A549 (cell line): ENCODE measurements at regions of chr1 and their contacts with region 1.

Region 1: GRCh38 chr1:16009030-16009709 is 5.1 kb downstream of the SRARP start:
- DNase-seq: peak; percentile 49 to 74
- ATAC-seq: peak; percentile 72 to 83
- H3K4me3 ChIP-seq: no peak overlapping the region
- H3K27ac ChIP-seq: no peak overlapping the region; a peak in 1 of 6 replicates
- H3K4me1 ChIP-seq: peaks cover 32% of the 10 kb centered on the region
- CTCF ChIP-seq: peak; percentile 84
- EP300 ChIP-seq: no peak
- POLR2A ChIP-seq: no peak
- RAD21 ChIP-seq: peak; percentile 88 to 91

Region 2: GRCh38 chr1:15918962-15919715 is 90.0 kb before region 1 on chr1:
- CTCF ChIA-PET with region 1: no interaction called
- POLR2A ChIA-PET with region 1: no interaction called
- DNase-seq: no peak
- ATAC-seq: no peak
- H3K4me3 ChIP-seq: no peak overlapping the region
- H3K27ac ChIP-seq: no peak overlapping the region
- H3K4me1 ChIP-seq: peaks cover 13% of the 10 kb centered on the region; the same call in 1 of the 3 replicates
- CTCF ChIP-seq: no peak
- EP300 ChIP-seq: no peak
- POLR2A ChIP-seq: no peak
- RAD21 ChIP-seq: no peak

Region 3: DNA sequence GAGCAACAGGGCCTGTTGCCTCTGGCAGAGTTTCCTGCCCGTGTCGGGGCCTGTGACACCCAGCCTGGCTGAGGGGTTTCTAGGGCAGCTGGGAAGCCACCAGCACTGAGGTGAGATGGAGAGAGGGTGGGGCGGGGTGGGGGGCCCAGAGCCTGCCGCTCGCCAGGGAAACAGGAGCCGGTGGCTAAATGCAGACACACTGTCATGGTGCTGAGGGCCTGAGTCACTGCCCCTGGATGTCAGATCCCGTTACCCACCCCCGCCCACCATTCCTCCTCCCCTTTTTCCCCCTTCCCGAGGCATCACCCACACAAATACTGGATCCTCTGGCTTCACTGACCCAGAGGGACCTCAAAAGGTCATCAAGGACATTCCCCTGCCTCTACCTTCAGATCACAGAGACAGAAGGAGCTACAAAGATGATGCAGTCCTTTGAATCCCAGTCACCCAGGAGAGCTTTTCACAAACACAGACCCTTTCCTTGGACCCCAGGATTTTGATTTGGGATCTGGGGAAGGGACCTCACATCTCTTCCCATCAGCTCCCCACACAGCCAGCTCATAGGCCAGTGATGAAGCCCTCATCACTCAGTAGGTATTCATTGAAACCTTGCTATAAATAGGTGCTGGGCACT is 10.6 kb after region 1 on chr1:
- CTCF ChIA-PET with region 1: interaction called, 12 read pairs
- POLR2A ChIA-PET with region 1: no interaction called
- DNase-seq: no peak
- ATAC-seq: no peak
- H3K4me3 ChIP-seq: no peak overlapping the region
- H3K27ac ChIP-seq: no peak overlapping the region
- H3K4me1 ChIP-seq: peaks cover 6% of the 10 kb centered on the region; the same call in 2 of the 3 replicates
- CTCF ChIP-seq: no peak
- EP300 ChIP-seq: no peak
- POLR2A ChIP-seq: no peak
- RAD21 ChIP-seq: no peak

Region 4: GRCh38 chr1:16032388-16033103 is 23.4 kb after region 1 on chr1:
- CTCF ChIA-PET with region 1: interaction called, 37 read pairs
- POLR2A ChIA-PET with region 1: no interaction called
- DNase-seq: peak; percentile 77 to 86
- ATAC-seq: peak; percentile 76 to 95
- H3K4me3 ChIP-seq: no peak overlapping the region
- H3K27ac ChIP-seq: no peak overlapping the region
- H3K4me1 ChIP-seq: peaks cover 5% of the 10 kb centered on the region
- CTCF ChIP-seq: peak; percentile 53
- EP300 ChIP-seq: no peak
- POLR2A ChIP-seq: no peak
- RAD21 ChIP-seq: peak; percentile 74 to 76

Region 5: GRCh38 chr1:16055613-16056520 is 46.7 kb after region 1 on chr1:
- CTCF ChIA-PET with region 1: interaction called, 20 read pairs
- POLR2A ChIA-PET with region 1: no interaction called
- DNase-seq: peak; percentile 82 to 84
- ATAC-seq: peak; percentile 76 to 92
- H3K4me3 ChIP-seq: no peak overlapping the region
- H3K27ac ChIP-seq: peak overlapping the region in 1 of 2 experiments; percentile 46; a peak in 2 of 6 replicates
- H3K4me1 ChIP-seq: peaks cover 6% of the 10 kb centered on the region; the same call in 2 of the 3 replicates
- CTCF ChIP-seq: peak; percentile 74
- EP300 ChIP-seq: no peak
- POLR2A ChIP-seq: no peak
- RAD21 ChIP-seq: peak; percentile 87 to 90

Region 6: DNA sequence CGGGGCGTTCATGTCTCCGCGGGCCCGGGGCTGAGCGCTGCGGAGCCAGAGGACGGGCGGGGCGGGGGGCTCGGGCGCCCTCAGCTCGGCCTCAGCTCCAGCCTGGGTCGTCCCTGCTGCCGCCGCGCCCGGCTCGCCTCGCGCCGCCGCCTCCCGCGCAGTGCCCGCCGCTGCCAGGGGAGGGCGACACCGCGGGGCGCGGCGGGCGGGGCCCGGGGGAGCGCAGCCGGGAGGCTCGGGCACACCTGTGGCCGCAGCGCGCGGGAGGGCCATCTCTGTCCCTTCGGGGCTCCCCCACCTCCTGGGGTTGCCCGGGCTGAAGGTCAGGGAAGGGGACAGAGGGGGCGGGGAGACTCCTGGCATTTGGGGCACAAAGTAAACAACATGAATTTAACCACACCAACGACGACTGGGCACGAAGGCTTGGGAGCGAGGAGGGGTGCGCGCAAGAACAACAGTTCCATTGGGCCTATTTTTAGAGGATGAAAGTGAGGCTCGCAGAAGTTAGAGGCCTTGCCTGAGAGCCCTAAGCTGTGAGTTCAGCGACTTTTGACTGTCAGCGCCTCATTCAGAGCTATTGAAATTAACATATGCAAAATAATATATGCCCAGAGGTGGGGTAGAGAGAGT is 64.4 kb after region 1 on chr1 and contains the start of gene FAM131C:
- CTCF ChIA-PET with region 1: interaction called, 16 read pairs
- POLR2A ChIA-PET with region 1: no interaction called
- DNase-seq: peak; percentile 46 to 61
- ATAC-seq: peak; percentile 45 to 53
- H3K4me3 ChIP-seq: peak within 1 kb of the TSS; percentile 90
- H3K27ac ChIP-seq: peak within 1 kb of the TSS; percentile 95 to 100
- H3K4me1 ChIP-seq: peaks cover 54% of the 10 kb centered on the region
- CTCF ChIP-seq: peak; percentile 65
- EP300 ChIP-seq: no peak
- POLR2A ChIP-seq: 0 out of 2 replicates have a peak, but pooled peaks have one; percentile 22
- RAD21 ChIP-seq: no peak; a peak in 2 of 5 replicates
- polyA plus RNA-seq, gene FAM131C: 2.3 and 2.9 TPM in 2 replicates